Tibial artery (tissue), 4 donors: ENCODE measurements at regions of chr10 and their contacts with region 1.

Region 1: GRCh38 chr10:88138319-88138848 is 275.0 kb downstream of the PTEN start:
- DNase-seq: no peak
- H3K4me3 ChIP-seq: no peak overlapping the region
- H3K27ac ChIP-seq: no peak overlapping the region
- H3K4me1 ChIP-seq: no peaks in the 10 kb centered on the region
- H3K27me3 ChIP-seq: no peaks in the 10 kb centered on the region
- CTCF ChIP-seq: no peak

Region 2: DNA sequence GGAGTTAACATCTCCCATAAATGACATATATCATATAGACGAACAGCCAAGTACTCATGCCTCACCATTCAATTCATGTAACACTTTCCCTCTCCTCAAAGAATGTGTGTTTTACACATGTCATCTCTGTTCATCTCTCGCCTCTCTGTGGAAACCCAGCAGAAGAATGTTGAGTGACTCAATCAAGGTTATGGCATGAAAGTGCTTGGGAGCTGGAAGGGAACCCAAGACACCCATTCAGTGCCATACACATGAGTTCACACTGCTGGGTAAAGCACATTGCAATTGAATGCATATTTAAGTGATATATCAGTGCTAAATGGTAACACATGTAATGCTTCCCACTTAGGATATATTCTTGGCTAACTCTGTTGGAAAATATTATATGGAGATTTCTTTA is 48.0 kb after region 1 on chr10:
- intact Hi-C with region 1: no loop called
- DNase-seq: no peak
- H3K4me3 ChIP-seq: no peak overlapping the region
- H3K27ac ChIP-seq: no peak overlapping the region
- H3K4me1 ChIP-seq: no peaks in the 10 kb centered on the region
- H3K27me3 ChIP-seq: no peaks in the 10 kb centered on the region
- CTCF ChIP-seq: no peak

Region 3: GRCh38 chr10:88346144-88346977 is 208.0 kb after region 1 on chr10:
- intact Hi-C with region 1: no loop called
- DNase-seq: no peak
- H3K4me3 ChIP-seq: no peak overlapping the region
- H3K27ac ChIP-seq: no peak overlapping the region
- H3K4me1 ChIP-seq: peaks cover 0 to 29% (median 7%) of the 10 kb centered on the region in 4 donors
- H3K27me3 ChIP-seq: no peaks in the 10 kb centered on the region
- CTCF ChIP-seq: no peak

Region 4: GRCh38 chr10:88541116-88541626 is 402.8 kb after region 1 on chr10:
- intact Hi-C with region 1: loop called (anchors 5 kb)
- DNase-seq: no peak
- H3K4me3 ChIP-seq: no peak overlapping the region
- H3K27ac ChIP-seq: peak overlapping the region; percentile 69 to 75
- H3K4me1 ChIP-seq: peaks cover 0 to 42% (median 13%) of the 10 kb centered on the region in 4 donors
- H3K27me3 ChIP-seq: no peaks in the 10 kb centered on the region
- CTCF ChIP-seq: no peak